ENCODE measurements at regions of chr1 and their contacts with region 1.

Region 1: GRCh38 chr1:173429471-173430402 is 47.4 kb upstream of the PRDX6 start:
- DNase-seq: peak; percentile 75 to 96
- H3K4me3 ChIP-seq: peak overlapping the region in 3 of 4 donors; percentile 15 to 29 (median 17)
- H3K27ac ChIP-seq: peak overlapping the region; percentile 69 to 87 (median 81)
- H3K4me1 ChIP-seq: peaks cover 13 to 31% (median 21%) of the 10 kb centered on the region in 4 donors
- H3K27me3 ChIP-seq: no peaks in the 10 kb centered on the region
- CTCF ChIP-seq: peak in 5 of 7 experiments; percentile 56 to 68 (median 61)
- EP300 ChIP-seq: no peak
- POLR2A ChIP-seq: no peak

Region 2: DNA sequence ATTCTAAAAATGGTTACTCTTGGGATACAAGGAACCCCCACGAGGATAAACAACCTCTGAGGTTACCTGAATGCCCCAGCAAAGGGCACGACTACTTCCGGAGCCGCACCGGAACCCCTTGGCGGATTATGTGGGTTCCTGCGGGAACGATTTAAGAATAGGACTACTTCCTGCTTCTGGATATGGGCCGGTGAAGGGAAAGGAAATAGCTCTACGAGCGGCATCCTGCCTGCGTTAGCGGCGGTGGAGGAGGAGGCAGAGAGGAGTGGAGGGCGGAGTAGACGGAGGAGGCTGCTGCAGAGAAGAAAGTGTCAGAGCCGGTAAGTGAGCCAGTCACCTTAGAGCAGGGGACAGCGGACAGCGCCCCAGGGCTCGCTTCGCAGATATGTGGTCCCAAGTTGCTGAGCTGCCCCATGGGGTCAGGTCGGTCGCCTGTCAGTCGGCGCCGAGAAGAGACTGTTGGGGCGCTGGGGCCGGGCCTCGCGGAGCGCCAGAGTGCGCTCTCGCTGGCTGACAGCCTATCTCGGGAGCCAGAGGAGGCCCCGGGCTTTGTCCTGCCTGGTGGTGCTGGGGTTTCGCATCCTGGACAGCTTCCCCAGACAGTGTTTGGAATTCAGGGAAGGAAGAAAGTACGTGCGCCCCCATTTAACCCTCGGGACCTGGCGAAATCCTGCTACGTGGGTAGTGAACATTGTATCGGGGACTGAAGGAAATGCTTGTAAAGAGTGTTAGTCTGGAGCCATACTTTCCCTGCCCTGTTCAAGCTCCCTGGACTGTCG is 285.2 kb after region 1 on chr1 and contains the start of gene KLHL20:
- intact Hi-C with region 1: loop called (anchors 10 kb)
- DNase-seq: peak; percentile 85 to 95
- H3K4me3 ChIP-seq: peak within 1 kb of the TSS; percentile 63 to 84 (median 74)
- H3K27ac ChIP-seq: peak within 1 kb of the TSS; percentile 83 to 94 (median 94)
- H3K4me1 ChIP-seq: peaks cover 4 to 33% (median 23%) of the 10 kb centered on the region in 4 donors
- H3K27me3 ChIP-seq: peaks cover 0 to 27% (median 10%) of the 10 kb centered on the region in 3 donors
- CTCF ChIP-seq: no peak
- EP300 ChIP-seq: no peak
- POLR2A ChIP-seq: peak in 1 of 4 donors; percentile 53
- total RNA-seq, gene KLHL20: 2.6 to 30.7 (median 10.7) TPM

Region 3: GRCh38 chr1:173824331-173825081 is 394.8 kb after region 1 on chr1 and contains the starts of genes CENPL and DARS2:
- intact Hi-C with region 1: loop called (anchors 10 kb)
- DNase-seq: peak; percentile 98 to 99
- H3K4me3 ChIP-seq: peak within 1 kb of the TSS; percentile 63 to 91 (median 74)
- H3K27ac ChIP-seq: peak within 1 kb of the TSS; percentile 89 to 98 (median 95)
- H3K4me1 ChIP-seq: peaks cover 9 to 60% (median 35%) of the 10 kb centered on the region in 4 donors
- H3K27me3 ChIP-seq: no peaks in the 10 kb centered on the region
- CTCF ChIP-seq: peak in 2 of 7 experiments; percentile 7
- EP300 ChIP-seq: no peak
- POLR2A ChIP-seq: peak in 1 of 4 donors; percentile 40
- total RNA-seq, gene CENPL: 0.45 to 14.1 (median 4.1) TPM
- total RNA-seq, gene DARS2: 3.1 to 36.8 (median 20.3) TPM